PC-3 (cell line): ENCODE measurements at regions of chr15 and their contacts with region 1.

Region 1: DNA sequence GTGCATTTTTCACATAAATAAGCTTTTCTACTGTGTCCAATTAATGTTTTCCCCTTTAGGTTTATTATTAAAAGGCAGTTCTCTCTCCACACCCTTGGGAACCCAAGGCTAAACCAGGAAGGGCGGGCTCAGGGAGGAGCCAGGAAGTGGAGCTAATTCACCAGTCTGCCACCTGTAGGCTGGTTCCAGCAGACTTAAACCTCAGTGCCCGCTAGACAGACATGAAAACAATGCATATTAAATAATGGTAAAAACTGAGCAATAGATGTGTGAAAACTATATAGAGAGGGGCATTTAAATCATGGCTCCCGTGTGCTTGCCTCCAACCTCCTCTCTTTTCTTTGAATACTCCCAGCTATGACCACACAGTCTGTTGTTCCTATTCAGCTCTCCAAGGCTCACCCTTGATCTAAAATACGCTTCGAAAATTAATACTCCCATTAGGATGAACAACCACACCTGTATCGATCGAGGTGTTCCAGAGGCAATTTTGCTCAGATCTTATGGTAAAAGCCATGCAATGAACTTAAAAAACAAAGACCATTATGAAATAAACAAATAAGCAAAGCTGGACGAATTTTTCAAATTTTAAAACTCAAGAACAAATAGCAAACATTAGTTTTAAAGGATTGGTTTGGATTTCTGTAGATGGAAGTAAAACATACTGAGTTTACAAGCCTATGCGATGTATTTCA is 253.3 kb downstream of the TJP1 start:
- DNase-seq: peak; percentile 70
- ATAC-seq: peak; percentile 94
- H3K4me3 ChIP-seq: no peak overlapping the region
- H3K27ac ChIP-seq: no peak overlapping the region
- H3K4me1 ChIP-seq: no peaks in the 10 kb centered on the region
- H3K27me3 ChIP-seq: peaks cover 63% of the 10 kb centered on the region
- CTCF ChIP-seq: peak; percentile 67

Region 2: GRCh38 chr15:29364429-29365078 is 204.4 kb before region 1 on chr15:
- CTCF ChIA-PET with region 1: no interaction called
- POLR2A ChIA-PET with region 1: no interaction called
- intact Hi-C with region 1: loop called (anchors 10 kb)
- DNase-seq: peak; percentile 56
- ATAC-seq: peak; percentile 92
- H3K4me3 ChIP-seq: no peak overlapping the region
- H3K27ac ChIP-seq: no peak overlapping the region
- H3K4me1 ChIP-seq: 0 out of 2 replicates have a peak, but pooled peaks cover 4% of the 10 kb centered on the region
- H3K27me3 ChIP-seq: peaks cover 31% of the 10 kb centered on the region
- CTCF ChIP-seq: peak; percentile 44

Region 3: GRCh38 chr15:29451201-29451781 is 117.7 kb before region 1 on chr15:
- CTCF ChIA-PET with region 1: no interaction called
- POLR2A ChIA-PET with region 1: no interaction called
- intact Hi-C with region 1: loop called (anchors 10 kb)
- DNase-seq: peak; percentile 23
- ATAC-seq: peak; percentile 54; the same call in 1 of the 2 replicates
- H3K4me3 ChIP-seq: no peak overlapping the region
- H3K27ac ChIP-seq: no peak overlapping the region
- H3K4me1 ChIP-seq: peaks cover 14% of the 10 kb centered on the region
- H3K27me3 ChIP-seq: no peaks in the 10 kb centered on the region
- CTCF ChIP-seq: peak; percentile 60

Region 4: GRCh38 chr15:29682781-29683180 is 113.8 kb after region 1 on chr15:
- CTCF ChIA-PET with region 1: no interaction called
- POLR2A ChIA-PET with region 1: no interaction called
- intact Hi-C with region 1: no loop called
- DNase-seq: no peak
- ATAC-seq: no peak
- H3K4me3 ChIP-seq: no peak overlapping the region
- H3K27ac ChIP-seq: no peak overlapping the region
- H3K4me1 ChIP-seq: peaks cover 38% of the 10 kb centered on the region
- H3K27me3 ChIP-seq: no peaks in the 10 kb centered on the region
- CTCF ChIP-seq: no peak